ENCODE measurements at regions of chr17 and their contacts with region 1.

Region 1: GRCh38 chr17:2366747-2367494 is 29.6 kb downstream of the SGSM2 start:
- DNase-seq: no peak
- H3K4me3 Mint-ChIP-seq: no peak overlapping the region
- H3K27ac Mint-ChIP-seq: no peak overlapping the region
- H3K4me1 Mint-ChIP-seq: no peaks in the 10 kb centered on the region
- H3K27me3 Mint-ChIP-seq: no peaks in the 10 kb centered on the region
- CTCF ChIP-seq: no peak

Region 2: DNA sequence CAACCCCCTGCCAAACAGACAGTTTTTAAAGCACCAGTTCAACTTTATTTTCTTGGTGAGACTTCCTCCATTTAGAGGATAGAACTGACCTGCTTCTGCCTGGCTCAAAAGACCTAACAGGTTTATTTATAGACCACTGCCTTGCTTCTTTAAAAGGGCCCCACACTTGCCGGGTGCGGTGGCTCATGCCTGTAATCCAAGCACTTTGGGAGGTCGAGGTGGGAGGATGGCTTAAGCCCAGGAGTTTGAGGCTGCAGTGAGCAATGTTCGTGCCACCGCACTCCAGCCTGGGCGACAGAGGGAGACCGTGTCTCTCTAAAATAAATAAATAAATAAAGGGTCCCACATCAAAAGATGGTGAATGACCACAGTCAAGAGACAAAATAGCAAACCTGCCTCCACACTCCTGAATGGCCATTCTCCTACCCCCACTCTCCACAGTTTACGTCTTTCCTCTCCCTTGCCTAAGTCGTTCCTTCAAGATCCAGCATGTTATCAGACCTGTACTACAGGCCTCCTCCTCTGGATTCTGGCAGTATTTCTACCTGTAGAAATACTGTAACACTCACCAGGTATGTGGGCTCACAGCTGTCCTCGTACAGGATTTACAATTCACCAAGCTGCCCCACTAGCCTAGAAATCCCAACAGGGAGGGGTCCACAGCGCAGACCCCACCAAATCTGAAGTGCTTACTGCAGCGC is 159.0 kb before region 1 on chr17:
- CTCF ChIA-PET with region 1: no interaction called
- POLR2A ChIA-PET with region 1: no interaction called
- intact Hi-C with region 1: no loop called
- DNase-seq: no peak
- H3K4me3 Mint-ChIP-seq: no peak overlapping the region
- H3K27ac Mint-ChIP-seq: no peak overlapping the region
- H3K4me1 Mint-ChIP-seq: peaks cover 7% of the 10 kb centered on the region
- H3K27me3 Mint-ChIP-seq: no peaks in the 10 kb centered on the region
- CTCF ChIP-seq: no peak

Region 3: GRCh38 chr17:2282297-2282873 is 84.5 kb before region 1 on chr17:
- CTCF ChIA-PET with region 1: no interaction called
- POLR2A ChIA-PET with region 1: no interaction called
- intact Hi-C with region 1: no loop called
- DNase-seq: peak; percentile 61
- H3K4me3 Mint-ChIP-seq: no peak overlapping the region
- H3K27ac Mint-ChIP-seq: peak overlapping the region; percentile 37
- H3K4me1 Mint-ChIP-seq: peaks cover 4% of the 10 kb centered on the region
- H3K27me3 Mint-ChIP-seq: no peaks in the 10 kb centered on the region
- CTCF ChIP-seq: peak; percentile 24

Region 4: GRCh38 chr17:2354311-2354710 is 12.6 kb before region 1 on chr17:
- CTCF ChIA-PET with region 1: interaction called, 22 read pairs
- POLR2A ChIA-PET with region 1: no interaction called
- intact Hi-C with region 1: no loop called
- DNase-seq: no peak
- H3K4me3 Mint-ChIP-seq: no peak overlapping the region
- H3K27ac Mint-ChIP-seq: no peak overlapping the region
- H3K4me1 Mint-ChIP-seq: peaks cover 3% of the 10 kb centered on the region
- H3K27me3 Mint-ChIP-seq: no peaks in the 10 kb centered on the region
- CTCF ChIP-seq: no peak

Region 5: GRCh38 chr17:2380226-2380922 is 13.5 kb after region 1 on chr17:
- CTCF ChIA-PET with region 1: interaction called, 43 read pairs
- POLR2A ChIA-PET with region 1: interaction called, 4 read pairs
- intact Hi-C with region 1: no loop called
- DNase-seq: no peak
- H3K4me3 Mint-ChIP-seq: no peak overlapping the region
- H3K27ac Mint-ChIP-seq: no peak overlapping the region
- H3K4me1 Mint-ChIP-seq: no peaks in the 10 kb centered on the region
- H3K27me3 Mint-ChIP-seq: no peaks in the 10 kb centered on the region
- CTCF ChIP-seq: no peak

Measured in MCF 10A (cell line).